ENCODE measurements at regions of chr7 and their contacts with region 1.

Region 1: DNA sequence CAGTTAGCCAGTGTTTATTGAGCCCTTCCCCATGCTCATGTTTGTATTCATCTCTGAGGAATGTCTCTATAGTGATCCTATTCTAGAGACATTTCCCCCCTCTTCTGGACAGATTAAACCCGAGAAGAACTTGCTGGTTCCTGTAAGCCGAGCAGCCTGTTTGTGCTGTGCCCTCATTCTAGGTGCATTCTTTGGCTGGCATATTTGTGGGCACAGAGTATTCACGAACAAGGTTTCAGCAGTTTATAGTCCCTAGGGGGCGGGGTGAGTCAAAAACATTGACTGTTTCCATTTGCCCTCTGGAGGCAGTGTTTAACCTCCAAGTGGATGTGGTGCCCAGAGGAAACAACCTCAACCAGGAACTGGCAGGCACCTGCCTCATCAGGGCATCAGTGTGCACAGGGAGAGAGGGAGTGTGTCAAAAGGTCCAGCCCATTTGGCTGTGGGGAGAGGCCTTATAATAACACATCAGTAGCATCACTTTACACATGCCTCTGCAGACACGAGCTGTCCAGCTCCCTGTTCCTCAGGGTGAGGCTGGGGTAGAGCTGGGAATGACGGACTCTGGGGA is 273.3 kb upstream of the LRGUK start:
- DNase-seq: peak; percentile 61
- H3K4me3 ChIP-seq: no peak overlapping the region
- H3K27ac ChIP-seq: peak overlapping the region; percentile 85
- H3K27me3 ChIP-seq: no peaks in the 10 kb centered on the region
- CTCF ChIP-seq: peak; percentile 51

Region 2: DNA sequence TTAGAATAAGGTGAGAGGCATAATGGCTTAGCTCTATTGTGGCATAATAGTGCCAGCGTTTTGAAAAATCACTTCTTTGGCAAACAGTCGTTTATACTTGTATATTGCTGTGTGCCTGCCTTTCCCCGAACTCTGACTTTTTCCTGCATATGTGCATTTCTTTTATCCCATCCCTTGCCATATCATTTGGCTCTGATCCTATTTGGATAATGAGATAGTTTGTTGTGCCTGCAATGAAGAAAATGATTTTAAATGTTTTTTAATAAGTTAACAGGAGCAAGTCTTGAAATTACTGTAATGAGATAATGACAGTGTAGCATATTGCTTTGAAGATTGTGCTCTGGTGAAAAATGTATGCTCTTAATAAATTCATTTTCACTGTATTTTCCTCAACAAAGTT is 14.7 kb before region 1 on chr7:
- CTCF ChIA-PET with region 1: interaction called, 10 read pairs
- POLR2A ChIA-PET with region 1: no interaction called
- DNase-seq: no peak
- H3K4me3 ChIP-seq: no peak overlapping the region
- H3K27ac ChIP-seq: no peak overlapping the region
- H3K27me3 ChIP-seq: no peaks in the 10 kb centered on the region
- CTCF ChIP-seq: no peak

Region 3: GRCh38 chr7:134184767-134185166 is 331.0 kb after region 1 on chr7:
- CTCF ChIA-PET with region 1: no interaction called
- POLR2A ChIA-PET with region 1: no interaction called
- DNase-seq: no peak
- H3K4me3 ChIP-seq: no peak overlapping the region
- H3K27ac ChIP-seq: no peak overlapping the region
- H3K27me3 ChIP-seq: no peaks in the 10 kb centered on the region
- CTCF ChIP-seq: no peak

Region 4: DNA sequence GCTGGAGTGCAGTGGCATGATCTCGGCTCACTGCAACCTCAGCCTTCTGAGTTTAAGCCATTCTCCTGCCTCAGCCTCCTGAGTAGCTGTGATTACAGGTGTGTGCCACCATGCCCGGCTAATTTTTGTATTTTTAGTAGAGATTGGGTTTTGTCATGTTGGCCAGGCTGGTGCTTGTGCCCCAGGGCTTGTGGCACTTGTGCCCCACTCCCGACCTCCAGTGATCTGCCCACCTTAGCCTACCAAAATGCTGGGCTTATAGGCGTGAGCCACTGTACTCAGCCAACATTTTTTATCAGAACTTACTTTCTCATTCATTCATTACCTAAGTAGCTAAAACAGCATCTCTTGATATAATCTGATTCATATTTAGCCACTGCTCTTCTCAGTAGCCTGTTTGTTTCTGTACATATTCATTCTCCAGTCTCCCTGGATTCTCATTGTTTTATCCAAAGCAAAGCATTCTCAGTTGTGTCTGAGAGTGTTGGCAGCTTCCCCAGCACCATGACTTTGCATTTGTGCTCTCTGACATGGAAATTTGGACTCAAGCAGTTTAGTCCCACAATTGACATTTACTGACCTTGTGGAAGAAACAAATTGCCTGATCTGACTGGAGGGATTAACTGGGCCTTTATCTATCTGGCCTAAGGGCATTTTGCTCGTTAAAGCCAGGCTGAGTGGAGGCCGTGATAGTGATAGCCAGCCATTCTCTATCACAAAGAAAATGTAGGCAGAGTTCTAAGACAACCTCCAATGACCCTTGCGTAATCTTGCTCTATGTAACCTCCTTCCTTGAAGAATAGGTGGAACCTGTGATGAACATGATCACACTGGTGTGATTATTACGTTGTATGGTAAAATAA is 740.0 kb after region 1 on chr7:
- CTCF ChIA-PET with region 1: no interaction called
- POLR2A ChIA-PET with region 1: no interaction called
- DNase-seq: peak; percentile 85
- H3K4me3 ChIP-seq: no peak overlapping the region
- H3K27ac ChIP-seq: peak overlapping the region; percentile 99
- H3K27me3 ChIP-seq: no peaks in the 10 kb centered on the region
- CTCF ChIP-seq: no peak